GM10248 (cell line): ENCODE measurements at regions of chr3 and their contacts with region 1.

Region 1: DNA sequence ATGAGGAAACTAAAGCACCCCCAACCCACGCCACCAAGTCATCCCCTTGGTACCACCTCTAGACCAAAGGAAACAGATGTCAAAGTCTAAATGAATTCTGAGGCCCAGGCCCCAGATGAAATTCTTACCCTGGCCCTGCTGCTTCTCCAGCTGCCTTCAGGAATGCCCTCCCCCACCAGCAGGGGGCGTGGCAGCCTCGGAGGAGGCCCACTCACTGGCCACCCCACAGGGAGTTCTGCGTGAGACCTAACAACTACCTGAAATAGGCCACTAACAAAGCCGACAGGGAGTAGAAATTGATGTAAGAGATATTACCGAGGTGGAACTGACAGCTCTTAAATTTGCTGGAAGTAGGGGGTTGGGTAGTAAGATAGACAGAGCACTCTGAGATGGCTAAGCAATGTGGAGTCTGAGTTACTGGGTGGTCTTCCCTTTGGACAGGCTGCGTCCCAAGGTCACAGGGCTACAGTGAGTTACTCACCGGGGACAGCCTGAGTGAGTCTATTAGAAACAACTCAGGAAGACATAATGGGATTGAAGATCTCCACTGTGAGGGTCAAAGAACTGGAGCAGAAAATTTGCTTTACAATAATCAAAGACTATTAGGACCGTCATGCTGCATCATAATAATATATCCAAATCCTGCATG is 240.7 kb downstream of the SHOX2 start:
- DNase-seq: peak; percentile 58
- CTCF ChIP-seq: peak; percentile 80

Region 2: GRCh38 chr3:157840564-157840963 is 24.9 kb before region 1 on chr3:
- CTCF ChIA-PET with region 1: interaction called, 13 read pairs
- POLR2A ChIA-PET with region 1: no interaction called
- DNase-seq: no peak
- CTCF ChIP-seq: no peak

Region 3: DNA sequence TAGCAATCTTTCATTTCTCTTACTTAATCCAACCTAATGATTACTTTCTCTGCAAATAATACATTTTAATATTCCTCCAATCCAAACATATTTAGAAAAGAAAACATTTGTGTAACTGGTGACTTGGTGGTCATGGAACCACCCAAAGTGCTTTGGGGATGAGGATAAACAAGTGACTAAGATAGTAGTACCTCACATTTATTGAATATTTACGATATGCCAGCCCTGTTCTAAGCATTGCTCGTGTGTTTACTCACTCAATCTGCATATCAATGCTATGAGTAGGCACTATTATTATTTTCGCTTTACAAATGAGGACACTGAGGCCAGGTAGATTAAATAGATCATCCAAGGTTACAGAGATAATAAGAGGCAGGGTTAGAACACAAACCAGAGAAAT is 51.2 kb after region 1 on chr3:
- CTCF ChIA-PET with region 1: no interaction called
- POLR2A ChIA-PET with region 1: no interaction called
- DNase-seq: no peak
- CTCF ChIP-seq: no peak

Region 4: GRCh38 chr3:158434412-158435038 is 569.0 kb after region 1 on chr3:
- CTCF ChIA-PET with region 1: interaction called, 27 read pairs
- POLR2A ChIA-PET with region 1: no interaction called
- DNase-seq: peak; percentile 9
- CTCF ChIP-seq: peak; percentile 72

Region 5: GRCh38 chr3:158532099-158532734 is 666.7 kb after region 1 on chr3:
- CTCF ChIA-PET with region 1: interaction called, 11 read pairs
- POLR2A ChIA-PET with region 1: no interaction called
- DNase-seq: no peak
- CTCF ChIP-seq: peak; percentile 42